ENCODE measurements at regions of chr6 and their contacts with region 1.

Region 1: GRCh38 chr6:156809034-156809433 is 31.9 kb downstream of the ARID1B start:
- DNase-seq: peak; percentile 55
- ATAC-seq: peak; percentile 98
- H3K4me3 ChIP-seq: no peak overlapping the region
- H3K27ac ChIP-seq: peak overlapping the region; percentile 27
- H3K4me1 ChIP-seq: peaks cover 24% of the 10 kb centered on the region
- H3K27me3 ChIP-seq: no peaks in the 10 kb centered on the region
- CTCF ChIP-seq: no peak
- EP300 ChIP-seq: 0 out of 4 replicates have a peak, but pooled peaks of 1 of the 2 experiments have one; percentile 13
- POLR2A ChIP-seq: 0 out of 2 replicates have a peak, but pooled peaks have one; percentile 35
- RAD21 ChIP-seq: no peak

Region 2: GRCh38 chr6:156577749-156578148 is 231.3 kb before region 1 on chr6:
- CTCF ChIA-PET with region 1: no interaction called
- POLR2A ChIA-PET with region 1: no interaction called
- RAD21 ChIA-PET with region 1: no interaction called
- SMC1A ChIA-PET with region 1: no interaction called
- in situ Hi-C with region 1: no loop called
- intact Hi-C with region 1: no loop called
- DNase-seq: no peak
- ATAC-seq: no peak
- H3K4me3 ChIP-seq: no peak overlapping the region
- H3K27ac ChIP-seq: no peak overlapping the region
- H3K4me1 ChIP-seq: no peaks in the 10 kb centered on the region
- H3K27me3 ChIP-seq: no peaks in the 10 kb centered on the region
- CTCF ChIP-seq: no peak
- EP300 ChIP-seq: no peak
- POLR2A ChIP-seq: no peak
- RAD21 ChIP-seq: no peak

Region 3: DNA sequence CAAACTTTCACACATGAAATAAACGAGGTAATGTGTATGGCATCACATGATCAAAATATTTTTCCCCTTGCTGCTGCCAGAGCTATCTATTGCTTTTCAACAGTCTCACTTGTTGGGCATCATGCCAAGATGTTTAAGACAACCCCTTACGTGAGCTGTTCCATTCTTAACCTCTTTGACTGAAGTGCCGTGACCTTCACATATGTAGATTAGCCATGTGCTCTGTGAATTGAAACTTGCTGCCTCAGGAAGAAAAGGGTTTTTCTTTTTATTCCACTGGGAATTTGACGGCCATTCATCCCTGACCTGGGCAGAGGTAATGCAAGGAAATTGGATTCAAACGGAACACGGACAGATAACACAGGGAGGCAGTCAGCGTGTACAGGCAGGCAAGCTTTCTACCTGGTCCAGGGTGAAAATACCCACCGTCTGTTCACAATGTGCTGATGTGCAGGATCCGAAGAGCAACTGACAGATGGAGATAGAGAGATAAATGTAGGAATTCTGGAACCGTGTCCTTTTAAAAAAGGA is 17.6 kb before region 1 on chr6:
- CTCF ChIA-PET with region 1: interaction called, 4 read pairs
- POLR2A ChIA-PET with region 1: interaction called, 14 read pairs
- RAD21 ChIA-PET with region 1: interaction called, 6 read pairs
- SMC1A ChIA-PET with region 1: interaction called, 26 read pairs
- in situ Hi-C with region 1: no loop called
- intact Hi-C with region 1: no loop called
- DNase-seq: peak; percentile 72
- ATAC-seq: peak; percentile 56
- H3K4me3 ChIP-seq: peak overlapping the region; percentile 24; the same call in 1 of the 2 replicates
- H3K27ac ChIP-seq: peak overlapping the region; percentile 23
- H3K4me1 ChIP-seq: peaks cover 50% of the 10 kb centered on the region
- H3K27me3 ChIP-seq: no peaks in the 10 kb centered on the region
- CTCF ChIP-seq: no peak
- EP300 ChIP-seq: no peak
- POLR2A ChIP-seq: 0 out of 2 replicates have a peak, but pooled peaks have one; percentile 36
- RAD21 ChIP-seq: no peak

Region 4: GRCh38 chr6:157158897-157159296 is 349.9 kb after region 1 on chr6:
- CTCF ChIA-PET with region 1: no interaction called
- POLR2A ChIA-PET with region 1: no interaction called
- RAD21 ChIA-PET with region 1: no interaction called
- SMC1A ChIA-PET with region 1: no interaction called
- in situ Hi-C with region 1: no loop called
- intact Hi-C with region 1: no loop called
- DNase-seq: no peak
- ATAC-seq: no peak
- H3K4me3 ChIP-seq: no peak overlapping the region
- H3K27ac ChIP-seq: no peak overlapping the region
- H3K4me1 ChIP-seq: no peaks in the 10 kb centered on the region
- H3K27me3 ChIP-seq: no peaks in the 10 kb centered on the region
- CTCF ChIP-seq: no peak
- EP300 ChIP-seq: no peak
- POLR2A ChIP-seq: no peak
- RAD21 ChIP-seq: no peak

Measured in GM12878 (cell line).